H1 (cell line): ENCODE measurements at regions of chr10 and their contacts with region 1.

Region 1: GRCh38 chr10:28925121-28925698 is 247.9 kb downstream of the BAMBI start:
- DNase-seq: no peak
- H3K4me3 ChIP-seq: peak overlapping the region in 1 of 4 experiments; percentile 6; a peak in 2 of 8 replicates
- H3K27ac ChIP-seq: no peak overlapping the region
- H3K4me1 ChIP-seq: peaks cover 0 to 3% (median 0%) of the 10 kb centered on the region in 4 experiments; a peak in 1 of 7 replicates
- H3K27me3 ChIP-seq: no peaks in the 10 kb centered on the region
- CTCF ChIP-seq: no peak
- EP300 ChIP-seq: no peak
- POLR2A ChIP-seq: no peak
- RAD21 ChIP-seq: no peak

Region 2: DNA sequence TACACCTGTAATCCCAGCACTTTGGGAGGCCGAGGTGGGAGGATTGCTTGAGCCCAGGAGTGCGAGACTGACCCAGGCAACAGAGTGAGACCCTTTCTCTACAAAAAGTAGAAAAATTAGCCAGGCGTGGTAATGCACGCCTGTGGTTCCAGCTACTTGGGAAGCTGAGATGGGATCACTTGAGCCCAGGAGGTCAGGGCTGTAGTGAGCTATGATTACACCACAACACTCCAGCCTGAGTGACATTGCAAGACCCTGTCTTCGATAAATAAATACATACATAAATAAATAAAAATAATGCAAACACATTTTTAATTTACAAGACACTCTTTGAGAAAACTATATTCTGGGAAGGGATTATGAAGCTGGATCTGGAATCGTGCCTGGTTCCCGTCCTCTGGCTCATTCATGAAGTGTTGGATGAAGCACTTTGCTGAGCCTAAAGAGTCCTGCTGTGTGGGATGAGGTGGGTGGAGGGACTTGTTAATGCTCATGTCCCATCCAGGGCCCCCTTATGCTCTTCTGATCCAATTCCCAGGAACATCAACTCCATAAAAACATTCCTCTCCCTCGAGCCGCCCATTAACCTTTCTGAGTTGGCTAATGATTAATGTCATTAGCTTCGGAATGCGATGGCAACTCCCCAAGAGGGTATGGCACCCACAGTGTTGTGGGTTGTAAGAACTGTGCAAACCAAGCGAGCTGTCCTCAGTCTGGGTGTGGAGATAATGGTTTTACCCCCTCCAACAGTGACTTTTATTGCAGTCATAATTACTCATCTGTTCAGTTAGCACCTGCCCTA is 11.6 kb before region 1 on chr10:
- CTCF ChIA-PET with region 1: interaction called, 10 read pairs
- POLR2A ChIA-PET with region 1: no interaction called
- DNase-seq: no peak
- H3K4me3 ChIP-seq: no peak overlapping the region
- H3K27ac ChIP-seq: no peak overlapping the region
- H3K4me1 ChIP-seq: no peaks in the 10 kb centered on the region
- H3K27me3 ChIP-seq: no peaks in the 10 kb centered on the region
- CTCF ChIP-seq: no peak
- EP300 ChIP-seq: no peak
- POLR2A ChIP-seq: no peak
- RAD21 ChIP-seq: no peak

Region 3: GRCh38 chr10:29039677-29040189 is 114.5 kb after region 1 on chr10:
- CTCF ChIA-PET with region 1: no interaction called
- POLR2A ChIA-PET with region 1: no interaction called
- DNase-seq: no peak
- H3K4me3 ChIP-seq: no peak overlapping the region
- H3K27ac ChIP-seq: no peak overlapping the region
- H3K4me1 ChIP-seq: no peaks in the 10 kb centered on the region; a peak in 1 of 7 replicates
- H3K27me3 ChIP-seq: no peaks in the 10 kb centered on the region
- CTCF ChIP-seq: no peak
- EP300 ChIP-seq: no peak
- POLR2A ChIP-seq: no peak
- RAD21 ChIP-seq: no peak